ENCODE measurements at regions of chr2 and their contacts with region 1.

Region 1: DNA sequence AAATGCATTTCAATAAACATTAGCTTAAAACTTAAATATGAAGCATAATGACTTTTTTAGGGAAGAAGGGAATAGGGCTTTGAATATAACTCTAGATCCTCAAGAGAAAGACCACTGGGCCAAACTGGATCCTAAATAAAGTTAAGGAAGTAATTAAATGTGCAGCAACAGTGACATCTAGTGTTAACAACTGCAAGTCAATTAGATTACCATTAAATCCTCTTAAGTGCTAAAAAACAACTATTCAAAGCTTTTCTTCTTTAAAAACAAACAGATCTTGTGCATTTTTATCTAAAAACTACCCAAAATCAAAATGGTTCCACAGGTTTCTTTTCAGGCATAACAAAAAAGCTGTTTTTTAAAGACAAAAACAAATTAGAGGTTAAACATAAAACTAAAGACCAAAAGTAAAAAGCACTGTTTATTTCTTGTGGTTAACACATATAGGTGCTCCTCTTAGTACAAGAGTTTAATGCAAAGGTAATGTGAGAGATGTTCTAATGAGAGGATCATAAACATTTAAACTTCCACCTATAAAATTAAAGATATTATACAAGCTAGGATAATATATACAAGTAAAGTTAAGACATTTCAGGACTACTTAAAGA is 111.4 kb downstream of the THADA start:
- DNase-seq: no peak
- CTCF ChIP-seq: peak; percentile 44

Region 2: DNA sequence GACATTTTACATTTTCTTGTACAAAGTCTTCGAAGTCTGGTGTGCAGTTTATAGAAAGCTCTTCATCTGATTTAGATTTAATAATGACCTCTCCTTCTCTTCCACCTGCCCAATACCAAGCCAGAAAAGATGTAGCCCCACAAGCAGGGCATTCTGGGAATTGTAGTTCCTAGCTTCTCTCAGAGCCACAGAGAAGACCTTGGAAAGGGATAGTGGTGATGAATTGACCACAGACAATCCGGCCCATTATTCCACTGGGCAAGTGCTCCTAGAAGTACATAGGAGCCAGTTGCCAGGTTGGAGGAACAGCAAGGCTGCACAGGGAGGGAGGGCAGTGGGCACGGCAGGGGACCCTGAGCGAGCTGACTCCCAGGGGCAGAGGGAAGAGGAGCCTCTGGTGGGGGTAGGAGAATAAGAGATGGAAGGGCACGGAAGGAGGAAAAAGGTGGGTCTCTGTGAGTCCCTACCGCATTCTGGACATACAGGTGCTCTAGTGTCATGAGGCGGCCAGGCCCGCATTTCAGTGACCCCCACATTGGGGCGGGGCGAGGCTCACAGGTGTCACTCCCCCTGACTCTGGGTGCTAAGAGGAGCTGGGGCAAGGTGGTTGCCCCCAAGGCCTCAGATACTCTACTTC is 539.5 kb before region 1 on chr2:
- in situ Hi-C with region 1: loop called (anchors 10 kb)
- DNase-seq: no peak
- CTCF ChIP-seq: no peak

Region 3: GRCh38 chr2:43127208-43127940 is 357.1 kb before region 1 on chr2:
- in situ Hi-C with region 1: loop called (anchors 10 kb)
- DNase-seq: peak; percentile 89
- CTCF ChIP-seq: peak; percentile 69

Region 4: DNA sequence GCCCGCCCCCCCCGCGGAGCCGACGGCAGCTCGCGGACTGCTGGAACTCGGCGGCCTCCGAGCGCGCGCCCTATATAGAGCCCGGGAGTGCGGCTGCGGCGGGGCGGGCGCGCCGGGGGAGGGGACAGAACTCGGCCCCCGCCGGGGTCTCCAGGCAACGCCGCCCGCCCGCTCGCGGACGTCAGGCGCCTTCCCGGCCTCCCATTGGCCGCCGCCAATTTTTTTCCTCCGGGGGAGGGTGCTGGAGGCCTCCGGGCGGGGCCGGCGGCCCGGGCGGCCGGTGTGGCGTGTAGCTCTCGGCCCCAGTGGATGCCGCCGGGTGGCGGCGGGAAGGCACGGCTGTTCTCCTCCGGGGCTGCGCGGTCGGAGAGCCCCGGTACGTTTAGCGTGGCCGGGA is 257.9 kb before region 1 on chr2 and contains the start of gene ZFP36L2:
- in situ Hi-C with region 1: loop called (anchors 5 kb)
- DNase-seq: peak; percentile 97
- CTCF ChIP-seq: no peak